ENCODE measurements at regions of chr16 and their contacts with region 1.

Region 1: GRCh38 chr16:3490911-3491629 is 4.2 kb downstream of the C16orf90 start:
- DNase-seq: no peak
- H3K4me3 ChIP-seq: no peak overlapping the region
- H3K27ac ChIP-seq: no peak overlapping the region
- H3K4me1 ChIP-seq: peaks cover 15% of the 10 kb centered on the region
- H3K27me3 ChIP-seq: no peaks in the 10 kb centered on the region
- CTCF ChIP-seq: no peak
- POLR2A ChIP-seq: no peak

Region 2: DNA sequence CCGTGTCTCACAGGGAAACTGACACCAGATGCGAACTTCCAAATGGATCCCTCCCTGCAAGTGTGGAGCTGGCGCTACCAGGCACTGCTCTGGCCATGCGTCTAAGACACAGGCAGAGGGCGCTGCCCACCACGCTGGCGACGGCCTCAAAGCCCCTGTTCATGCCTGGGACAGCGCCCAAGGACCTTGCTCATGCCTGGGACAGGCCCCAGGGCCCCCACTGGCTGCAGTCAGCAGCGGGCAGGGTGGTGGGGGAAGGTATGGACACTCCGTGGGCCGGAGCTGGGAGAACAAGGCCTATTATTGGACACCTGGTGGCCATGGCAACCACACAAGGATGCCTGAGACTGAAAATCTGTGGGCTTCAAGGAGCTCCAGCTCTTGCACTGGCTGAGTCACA is 652.1 kb before region 1 on chr16:
- intact Hi-C with region 1: loop called (anchors 10 kb)
- DNase-seq: no peak
- H3K4me3 ChIP-seq: no peak overlapping the region
- H3K27ac ChIP-seq: no peak overlapping the region
- H3K4me1 ChIP-seq: peaks cover 23% of the 10 kb centered on the region
- H3K27me3 ChIP-seq: no peaks in the 10 kb centered on the region
- CTCF ChIP-seq: peak in 2 of 3 experiments; percentile 29 to 63
- POLR2A ChIP-seq: no peak

Region 3: GRCh38 chr16:3274490-3274889 is 216.6 kb before region 1 on chr16:
- intact Hi-C with region 1: loop called (anchors 10 kb)
- DNase-seq: no peak
- H3K4me3 ChIP-seq: no peak overlapping the region
- H3K27ac ChIP-seq: no peak overlapping the region
- H3K4me1 ChIP-seq: no peaks in the 10 kb centered on the region
- H3K27me3 ChIP-seq: no peaks in the 10 kb centered on the region
- CTCF ChIP-seq: no peak
- POLR2A ChIP-seq: no peak

Measured in vagina (tissue), 2 donors.